Spleen (tissue), 13 donors: ENCODE measurements at regions of chr18 and their contacts with region 1.

Region 1: DNA sequence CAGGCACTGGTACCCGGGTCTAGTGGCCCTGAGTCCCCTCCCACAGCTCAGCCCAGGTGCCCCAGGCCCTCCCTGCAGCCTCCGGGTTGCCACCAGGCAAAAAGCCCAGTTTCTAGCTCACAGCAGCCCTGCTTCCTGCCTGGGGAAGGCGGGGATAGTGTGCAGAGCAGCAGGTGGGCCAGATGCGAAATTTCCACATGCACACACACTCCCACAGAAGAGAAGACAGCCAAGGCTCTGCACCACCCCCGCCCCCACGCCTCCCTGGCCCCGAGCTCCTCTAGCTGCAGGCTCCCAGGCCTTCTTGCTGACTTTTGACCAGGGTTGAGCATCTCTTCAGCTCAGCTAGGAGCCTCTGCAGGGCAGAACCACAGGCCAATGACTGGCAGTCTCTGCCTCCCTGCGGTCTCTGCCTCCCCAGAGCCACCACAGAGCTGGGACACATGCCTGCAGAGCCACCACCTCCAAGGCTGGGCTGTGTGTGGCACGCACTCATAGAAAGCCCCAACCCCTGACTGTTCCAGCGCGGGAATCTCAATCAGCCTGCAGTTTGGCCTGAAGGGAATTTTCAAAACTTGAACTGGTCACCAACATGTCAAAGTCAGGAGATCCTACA is 7.2 kb downstream of the SLC66A2 start:
- DNase-seq: peak; percentile 75
- H3K4me3 ChIP-seq: no peak overlapping the region
- H3K27ac ChIP-seq: peak overlapping the region in 3 of 8 donors; percentile 2 to 37 (median 4)
- H3K4me1 ChIP-seq: peaks cover 10 to 74% (median 47%) of the 10 kb centered on the region in 6 donors
- H3K27me3 ChIP-seq: no peaks in the 10 kb centered on the region
- CTCF ChIP-seq: no peak
- POLR2A ChIP-seq: no peak

Region 2: DNA sequence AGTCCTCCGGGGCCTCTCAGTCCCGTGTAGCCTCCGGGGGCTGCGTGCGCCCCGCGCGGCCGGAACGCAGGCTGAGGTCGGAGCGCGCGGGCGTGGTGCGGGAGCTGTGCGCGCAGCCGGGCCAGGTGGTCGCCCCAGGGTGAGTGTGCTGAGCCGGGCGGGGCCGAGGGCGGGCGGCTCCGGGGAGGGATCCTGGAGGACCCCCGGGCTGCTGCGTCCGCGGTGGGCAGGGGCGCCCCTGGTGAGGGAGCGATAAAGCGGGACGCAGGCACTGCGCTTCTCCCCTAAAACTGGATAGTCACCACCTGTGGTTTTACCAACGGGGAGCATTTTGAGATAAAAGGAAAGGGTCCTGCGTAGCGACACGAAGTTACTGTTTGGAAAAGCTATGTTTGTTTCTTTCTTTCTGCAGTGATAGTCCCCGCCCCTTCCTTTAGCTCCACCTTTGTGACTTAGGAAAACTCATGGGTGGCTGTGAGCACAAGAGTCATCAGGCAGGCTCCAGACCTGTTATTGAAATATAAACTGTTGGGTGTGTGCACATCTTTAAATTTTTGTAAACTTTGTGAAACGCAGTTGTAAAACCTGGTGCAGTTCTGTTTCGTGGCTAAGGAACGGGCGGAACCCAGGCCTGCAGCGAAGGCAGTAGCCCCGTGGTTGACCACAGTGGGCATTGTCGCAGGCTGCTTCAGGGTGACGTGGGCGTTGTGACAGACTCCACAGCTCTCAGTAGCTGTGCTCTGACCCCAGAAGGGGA is 263.9 kb before region 1 on chr18:
- intact Hi-C with region 1: loop called (anchors 10 kb)
- DNase-seq: peak; percentile 93
- H3K4me3 ChIP-seq: peak overlapping the region; percentile 92 to 100 (median 97)
- H3K27ac ChIP-seq: peak overlapping the region; percentile 96 to 100 (median 98)
- H3K4me1 ChIP-seq: peaks cover 33 to 79% (median 69%) of the 10 kb centered on the region in 6 donors
- H3K27me3 ChIP-seq: no peaks in the 10 kb centered on the region
- CTCF ChIP-seq: no peak
- POLR2A ChIP-seq: no peak